ENCODE measurements at regions of chr14 and their contacts with region 1.

Region 1: DNA sequence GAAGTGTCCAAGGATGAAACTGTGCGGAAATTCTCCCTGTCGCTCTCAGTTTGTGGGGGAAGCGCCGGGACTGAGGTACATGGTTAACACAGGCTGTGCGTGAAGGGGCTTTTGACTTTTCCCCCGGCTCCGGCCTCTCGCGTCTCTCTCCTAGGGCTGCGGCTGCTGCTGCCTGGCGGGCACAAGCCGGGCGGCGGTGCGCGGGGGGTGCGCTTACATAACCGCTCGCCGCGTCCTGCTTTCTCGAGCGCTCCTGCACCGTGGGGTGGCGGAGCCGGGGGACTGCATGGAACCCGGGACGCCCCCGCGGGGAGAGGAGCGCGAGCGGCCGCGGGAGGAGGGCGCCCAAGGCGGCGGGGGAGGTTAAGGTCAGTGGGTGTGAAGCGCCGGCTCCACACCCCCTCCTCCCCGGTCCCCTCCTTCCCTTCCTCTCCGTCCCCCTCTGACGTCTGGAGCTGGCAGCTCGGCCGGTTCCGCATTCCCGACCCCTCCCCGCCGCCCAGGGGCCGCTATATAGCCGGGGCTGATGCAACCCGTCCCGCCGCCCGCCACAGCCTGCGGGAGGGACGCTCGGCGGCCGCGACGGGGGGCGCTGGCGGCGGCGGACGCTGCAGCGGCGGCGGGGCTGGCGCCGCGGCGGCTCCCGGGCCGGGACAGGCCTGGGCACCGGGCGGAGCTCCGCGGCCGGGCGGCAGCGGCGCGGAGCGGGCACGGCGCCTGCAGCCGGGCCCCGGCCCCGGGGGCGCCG is at the start of gene JDP2:
- DNase-seq: no peak
- ATAC-seq: peak; percentile 69
- H3K4me3 ChIP-seq: peak within 1 kb of the TSS; percentile 86
- H3K27ac ChIP-seq: peak within 1 kb of the TSS; percentile 91
- H3K4me1 ChIP-seq: peaks cover 27% of the 10 kb centered on the region
- H3K27me3 ChIP-seq: no peaks in the 10 kb centered on the region
- CTCF ChIP-seq: 0 out of 6 replicates have a peak, but pooled peaks of 1 of the 3 experiments have one; percentile 3
- EP300 ChIP-seq: no peak
- POLR2A ChIP-seq: peak; percentile 66; the same call in 1 of the 2 replicates
- RAD21 ChIP-seq: no peak
- polyA plus RNA-seq, gene JDP2: 0.71 to 1.2 TPM

Region 2: GRCh38 chr14:74667758-74668157 is 759.9 kb before region 1 on chr14:
- CTCF ChIA-PET with region 1: no interaction called
- POLR2A ChIA-PET with region 1: no interaction called
- RAD21 ChIA-PET with region 1: no interaction called
- SMC1A ChIA-PET with region 1: no interaction called
- in situ Hi-C with region 1: no loop called
- intact Hi-C with region 1: no loop called
- DNase-seq: no peak
- ATAC-seq: no peak
- H3K4me3 ChIP-seq: no peak overlapping the region
- H3K27ac ChIP-seq: no peak overlapping the region
- H3K4me1 ChIP-seq: no peaks in the 10 kb centered on the region
- H3K27me3 ChIP-seq: no peaks in the 10 kb centered on the region
- CTCF ChIP-seq: no peak
- EP300 ChIP-seq: no peak
- POLR2A ChIP-seq: no peak
- RAD21 ChIP-seq: no peak

Region 3: GRCh38 chr14:75333606-75334548 is 93.8 kb before region 1 on chr14:
- CTCF ChIA-PET with region 1: no interaction called
- POLR2A ChIA-PET with region 1: no interaction called
- RAD21 ChIA-PET with region 1: interaction called, 3 read pairs
- SMC1A ChIA-PET with region 1: interaction called, 3 read pairs
- in situ Hi-C with region 1: no loop called
- intact Hi-C with region 1: loop called (anchors 5 kb)
- DNase-seq: peak; percentile 28
- ATAC-seq: peak; percentile 29
- H3K4me3 ChIP-seq: peak overlapping the region; percentile 25; the same call in 1 of the 2 replicates
- H3K27ac ChIP-seq: peak overlapping the region; percentile 49
- H3K4me1 ChIP-seq: peaks cover 27% of the 10 kb centered on the region
- H3K27me3 ChIP-seq: no peaks in the 10 kb centered on the region; a peak in 1 of 4 replicates
- CTCF ChIP-seq: no peak
- EP300 ChIP-seq: no peak
- POLR2A ChIP-seq: peak; percentile 41; the same call in 1 of the 2 replicates
- RAD21 ChIP-seq: no peak

Region 4: GRCh38 chr14:75461755-75462349 is 34.2 kb after region 1 on chr14:
- CTCF ChIA-PET with region 1: no interaction called
- POLR2A ChIA-PET with region 1: no interaction called
- RAD21 ChIA-PET with region 1: no interaction called
- SMC1A ChIA-PET with region 1: no interaction called
- in situ Hi-C with region 1: no loop called
- intact Hi-C with region 1: no loop called
- DNase-seq: no peak
- ATAC-seq: no peak
- H3K4me3 ChIP-seq: no peak overlapping the region
- H3K27ac ChIP-seq: no peak overlapping the region
- H3K4me1 ChIP-seq: no peaks in the 10 kb centered on the region; the same call in 1 of the 2 replicates
- H3K27me3 ChIP-seq: no peaks in the 10 kb centered on the region
- CTCF ChIP-seq: no peak
- EP300 ChIP-seq: no peak
- POLR2A ChIP-seq: no peak
- RAD21 ChIP-seq: no peak

Region 5: GRCh38 chr14:75783184-75783583 is 355.5 kb after region 1 on chr14:
- CTCF ChIA-PET with region 1: no interaction called
- POLR2A ChIA-PET with region 1: no interaction called
- RAD21 ChIA-PET with region 1: no interaction called
- SMC1A ChIA-PET with region 1: no interaction called
- in situ Hi-C with region 1: no loop called
- intact Hi-C with region 1: no loop called
- DNase-seq: no peak
- ATAC-seq: no peak
- H3K4me3 ChIP-seq: no peak overlapping the region
- H3K27ac ChIP-seq: no peak overlapping the region
- H3K4me1 ChIP-seq: no peaks in the 10 kb centered on the region
- H3K27me3 ChIP-seq: no peaks in the 10 kb centered on the region
- CTCF ChIP-seq: no peak
- EP300 ChIP-seq: no peak
- POLR2A ChIP-seq: no peak
- RAD21 ChIP-seq: no peak

Measured in GM12878 (cell line).